ENCODE measurements at regions of chrX and their contacts with region 1.

Region 1: DNA sequence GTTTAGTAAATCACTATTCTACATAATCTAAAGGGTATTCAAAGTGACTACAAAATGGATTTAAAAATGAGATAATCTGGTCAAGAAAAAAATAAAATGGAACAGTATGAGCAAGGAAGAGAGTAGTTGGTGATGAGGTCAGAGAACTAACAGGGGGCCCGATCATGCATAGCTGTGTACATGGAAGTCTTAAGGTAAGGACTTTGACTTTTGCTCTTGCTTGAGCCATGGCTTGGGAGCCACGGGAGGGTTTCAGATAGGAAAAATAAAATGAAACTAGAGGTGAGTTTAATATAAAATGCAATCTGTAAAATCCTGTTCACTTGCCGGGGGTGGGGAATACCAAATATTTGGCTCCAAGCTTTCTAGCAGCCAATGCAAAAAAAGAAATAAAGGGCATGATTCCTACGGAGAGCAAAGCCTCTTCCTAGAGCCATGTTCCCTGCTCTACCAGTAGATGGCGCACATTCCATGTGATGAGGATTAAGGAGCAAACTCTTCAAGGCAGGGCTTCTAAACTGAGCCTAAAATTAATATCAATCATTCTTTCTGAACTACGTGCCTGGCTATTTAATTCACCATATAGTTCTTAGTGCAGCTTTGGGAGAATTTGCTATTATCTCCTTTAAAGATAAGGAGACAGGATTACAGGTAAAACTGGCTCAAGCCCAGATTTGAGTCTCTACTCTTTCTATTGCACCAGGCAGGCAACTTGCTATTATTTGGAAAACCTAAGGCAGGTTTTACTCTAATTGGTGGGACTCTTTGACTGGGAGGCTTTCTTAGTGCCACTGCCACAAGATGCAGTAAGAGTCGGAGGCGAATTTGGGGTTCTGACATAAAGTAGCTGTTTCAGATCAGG is 6.8 kb upstream of the CLCN5 start:
- DNase-seq: peak; percentile 44
- H3K4me3 ChIP-seq: no peak overlapping the region
- H3K27ac ChIP-seq: no peak overlapping the region
- H3K4me1 ChIP-seq: no peaks in the 10 kb centered on the region
- H3K27me3 ChIP-seq: no peaks in the 10 kb centered on the region; the same call in 1 of the 2 replicates
- CTCF ChIP-seq: peak; percentile 96
- EP300 ChIP-seq: no peak
- RAD21 ChIP-seq: peak; percentile 87

Region 2: GRCh38 chrX:49725923-49726904 is 189.4 kb before region 1 on chrX:
- CTCF ChIA-PET with region 1: no interaction called
- POLR2A ChIA-PET with region 1: no interaction called
- DNase-seq: no peak
- H3K4me3 ChIP-seq: no peak overlapping the region
- H3K27ac ChIP-seq: no peak overlapping the region
- H3K4me1 ChIP-seq: no peaks in the 10 kb centered on the region
- H3K27me3 ChIP-seq: no peaks in the 10 kb centered on the region
- CTCF ChIP-seq: no peak
- EP300 ChIP-seq: no peak
- RAD21 ChIP-seq: no peak

Region 3: GRCh38 chrX:49884290-49884862 is 31.2 kb before region 1 on chrX:
- CTCF ChIA-PET with region 1: interaction called, 14 read pairs
- POLR2A ChIA-PET with region 1: no interaction called
- DNase-seq: peak; percentile 62
- H3K4me3 ChIP-seq: no peak overlapping the region
- H3K27ac ChIP-seq: no peak overlapping the region
- H3K4me1 ChIP-seq: peaks cover 0 to 16% of the 10 kb centered on the region in 2 experiments; a peak in 1 of 4 replicates
- H3K27me3 ChIP-seq: no peaks in the 10 kb centered on the region
- CTCF ChIP-seq: peak; percentile 81
- EP300 ChIP-seq: no peak
- RAD21 ChIP-seq: peak; percentile 53

Region 4: DNA sequence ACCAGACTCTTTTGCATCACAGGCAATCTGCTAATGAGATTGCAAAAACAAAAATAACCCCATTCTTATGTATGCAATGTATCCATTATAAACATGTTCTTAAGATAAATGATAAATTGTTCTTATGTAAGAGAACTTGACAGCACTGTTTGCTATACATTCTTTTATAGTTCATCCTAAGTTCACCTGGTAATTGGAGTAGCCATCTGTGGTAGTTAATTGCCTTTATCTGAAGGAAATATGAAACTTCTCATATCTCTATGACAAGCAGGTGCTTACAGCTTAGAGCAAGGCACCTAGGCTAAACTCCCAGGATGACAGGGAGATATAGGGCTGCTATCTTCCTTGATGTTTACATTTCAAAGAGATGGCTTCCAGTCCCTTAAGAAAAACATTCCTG is 14.5 kb before region 1 on chrX:
- CTCF ChIA-PET with region 1: interaction called, 19 read pairs
- POLR2A ChIA-PET with region 1: no interaction called
- DNase-seq: no peak
- H3K4me3 ChIP-seq: no peak overlapping the region
- H3K27ac ChIP-seq: no peak overlapping the region
- H3K4me1 ChIP-seq: no peaks in the 10 kb centered on the region
- H3K27me3 ChIP-seq: peaks cover 6% of the 10 kb centered on the region; the same call in 1 of the 2 replicates
- CTCF ChIP-seq: no peak
- EP300 ChIP-seq: no peak
- RAD21 ChIP-seq: no peak

Region 5: GRCh38 chrX:50036426-50036825 is 120.8 kb after region 1 on chrX:
- CTCF ChIA-PET with region 1: no interaction called
- POLR2A ChIA-PET with region 1: no interaction called
- DNase-seq: no peak
- H3K4me3 ChIP-seq: no peak overlapping the region
- H3K27ac ChIP-seq: no peak overlapping the region
- H3K4me1 ChIP-seq: no peaks in the 10 kb centered on the region
- H3K27me3 ChIP-seq: no peaks in the 10 kb centered on the region
- CTCF ChIP-seq: no peak
- EP300 ChIP-seq: no peak
- RAD21 ChIP-seq: no peak

Region 6: GRCh38 chrX:50081282-50081889 is 165.8 kb after region 1 on chrX:
- CTCF ChIA-PET with region 1: interaction called, 31 read pairs
- POLR2A ChIA-PET with region 1: no interaction called
- DNase-seq: peak; percentile 27
- H3K4me3 ChIP-seq: no peak overlapping the region; a peak in 1 of 4 replicates
- H3K27ac ChIP-seq: no peak overlapping the region
- H3K4me1 ChIP-seq: no peaks in the 10 kb centered on the region
- H3K27me3 ChIP-seq: no peaks in the 10 kb centered on the region
- CTCF ChIP-seq: peak; percentile 45
- EP300 ChIP-seq: no peak
- RAD21 ChIP-seq: peak; percentile 82

Region 7: DNA sequence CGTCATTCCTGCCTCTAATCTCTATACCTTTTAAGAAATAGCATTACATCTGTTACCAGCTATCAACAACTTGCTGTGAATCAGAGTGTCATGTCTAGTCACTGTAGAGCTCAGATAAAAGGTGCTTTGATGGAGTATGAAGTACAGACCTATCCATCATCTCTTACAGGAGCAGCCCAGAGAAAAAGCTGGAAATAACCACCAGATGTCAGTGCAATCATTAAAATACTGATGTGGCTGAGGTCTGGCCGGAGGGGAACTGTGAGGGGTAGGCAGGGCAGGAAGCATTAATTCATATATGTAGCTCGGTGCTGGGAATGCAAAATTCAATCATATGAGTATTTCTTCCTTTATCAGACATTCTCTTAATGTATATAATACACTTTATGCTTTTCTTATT is 184.6 kb after region 1 on chrX:
- CTCF ChIA-PET with region 1: interaction called, 12 read pairs
- POLR2A ChIA-PET with region 1: no interaction called
- DNase-seq: peak; percentile 35
- H3K4me3 ChIP-seq: no peak overlapping the region
- H3K27ac ChIP-seq: no peak overlapping the region
- H3K4me1 ChIP-seq: peaks cover 0 to 3% of the 10 kb centered on the region in 2 experiments; a peak in 2 of 4 replicates
- H3K27me3 ChIP-seq: no peaks in the 10 kb centered on the region
- CTCF ChIP-seq: peak; percentile 54
- EP300 ChIP-seq: no peak
- RAD21 ChIP-seq: peak; percentile 76

Region 8: GRCh38 chrX:50536955-50537354 is 621.4 kb after region 1 on chrX:
- CTCF ChIA-PET with region 1: no interaction called
- POLR2A ChIA-PET with region 1: no interaction called
- DNase-seq: no peak
- H3K4me3 ChIP-seq: no peak overlapping the region
- H3K27ac ChIP-seq: no peak overlapping the region
- H3K4me1 ChIP-seq: no peaks in the 10 kb centered on the region
- H3K27me3 ChIP-seq: peaks cover 4% of the 10 kb centered on the region; the same call in 1 of the 2 replicates
- CTCF ChIP-seq: no peak
- EP300 ChIP-seq: no peak
- RAD21 ChIP-seq: no peak

Measured in SK-N-SH (cell line).